IMR-90 (cell line): ENCODE measurements at regions of chr6 and their contacts with region 1.

Region 1: GRCh38 chr6:68677058-68677457 is 42.0 kb downstream of the ADGRB3 start:
- DNase-seq: no peak
- ATAC-seq: no peak
- H3K4me3 ChIP-seq: no peak overlapping the region
- H3K27ac ChIP-seq: no peak overlapping the region
- H3K4me1 ChIP-seq: no peaks in the 10 kb centered on the region
- H3K27me3 ChIP-seq: no peaks in the 10 kb centered on the region
- CTCF ChIP-seq: no peak
- POLR2A ChIP-seq: no peak
- RAD21 ChIP-seq: no peak

Region 2: DNA sequence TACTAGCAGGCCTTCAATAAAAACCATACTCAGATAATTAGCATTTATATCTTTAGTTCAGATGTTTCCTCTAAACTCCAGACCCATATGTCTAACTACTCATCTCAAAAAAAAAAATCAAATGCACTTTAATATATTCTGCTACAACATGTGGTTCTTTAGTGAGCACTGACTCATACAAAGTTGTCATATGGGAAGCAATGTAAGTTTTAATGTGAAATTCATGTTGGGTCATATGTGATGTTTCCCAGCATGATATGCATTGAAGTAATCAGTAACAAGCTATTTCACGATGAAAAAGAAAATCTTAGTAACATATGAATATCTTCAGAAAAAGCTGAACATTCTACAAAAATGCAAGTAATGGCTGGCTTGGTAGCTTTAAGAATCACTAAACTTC is 901.7 kb before region 1 on chr6:
- CTCF ChIA-PET with region 1: no interaction called
- POLR2A ChIA-PET with region 1: no interaction called
- dilution Hi-C with region 1: no loop called
- in situ Hi-C with region 1: no loop called
- intact Hi-C with region 1: no loop called
- DNase-seq: no peak
- ATAC-seq: no peak
- H3K4me3 ChIP-seq: no peak overlapping the region
- H3K27ac ChIP-seq: no peak overlapping the region
- H3K4me1 ChIP-seq: no peaks in the 10 kb centered on the region
- H3K27me3 ChIP-seq: no peaks in the 10 kb centered on the region
- CTCF ChIP-seq: no peak
- POLR2A ChIP-seq: no peak
- RAD21 ChIP-seq: no peak

Region 3: DNA sequence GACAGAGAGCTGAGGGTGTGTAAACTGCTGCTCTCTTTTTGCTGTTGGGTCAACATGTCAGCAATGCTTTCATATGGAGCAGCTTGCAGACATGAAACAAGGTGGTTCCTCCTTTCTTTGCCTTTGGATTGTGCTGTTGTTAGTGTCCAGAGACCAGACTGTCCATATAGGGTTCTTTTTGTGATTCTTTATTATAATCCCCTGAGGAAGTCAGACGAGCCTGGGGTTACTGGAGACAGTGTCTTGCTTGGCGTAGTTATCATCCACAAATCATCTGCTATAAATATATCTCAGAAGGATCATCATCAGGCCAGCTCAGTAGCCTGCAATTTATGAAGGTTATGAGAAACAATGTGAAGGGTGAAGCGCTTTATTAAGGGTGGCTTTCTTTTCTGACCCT is 44.3 kb before region 1 on chr6:
- CTCF ChIA-PET with region 1: no interaction called
- POLR2A ChIA-PET with region 1: no interaction called
- dilution Hi-C with region 1: no loop called
- in situ Hi-C with region 1: no loop called
- intact Hi-C with region 1: no loop called
- DNase-seq: no peak
- ATAC-seq: no peak
- H3K4me3 ChIP-seq: no peak overlapping the region
- H3K27ac ChIP-seq: no peak overlapping the region
- H3K4me1 ChIP-seq: no peaks in the 10 kb centered on the region
- H3K27me3 ChIP-seq: peaks cover 5% of the 10 kb centered on the region
- CTCF ChIP-seq: no peak
- POLR2A ChIP-seq: no peak
- RAD21 ChIP-seq: no peak

Region 4: DNA sequence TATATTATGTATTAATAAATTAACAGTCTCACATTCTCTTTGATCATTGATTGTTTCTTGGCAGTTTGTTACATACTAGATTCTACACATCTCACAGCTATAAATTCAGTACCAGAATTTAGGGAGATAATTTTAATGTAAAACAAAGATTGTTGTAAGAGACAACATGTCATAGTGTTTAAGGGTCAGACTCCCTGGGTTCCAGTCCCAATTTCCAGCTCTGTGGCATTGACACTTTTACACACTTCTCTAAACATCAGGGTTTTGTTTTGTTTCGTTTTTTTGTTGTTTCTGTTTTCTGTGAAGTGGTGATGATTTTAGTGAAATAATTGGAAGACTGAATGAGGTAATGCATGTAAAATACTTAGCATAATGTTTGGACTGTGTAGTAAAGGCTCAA is 22.0 kb before region 1 on chr6:
- CTCF ChIA-PET with region 1: no interaction called
- POLR2A ChIA-PET with region 1: no interaction called
- dilution Hi-C with region 1: no loop called
- in situ Hi-C with region 1: no loop called
- intact Hi-C with region 1: loop called (anchors 1 kb)
- DNase-seq: no peak
- ATAC-seq: no peak
- H3K4me3 ChIP-seq: no peak overlapping the region
- H3K27ac ChIP-seq: no peak overlapping the region
- H3K4me1 ChIP-seq: no peaks in the 10 kb centered on the region
- H3K27me3 ChIP-seq: no peaks in the 10 kb centered on the region
- CTCF ChIP-seq: no peak
- POLR2A ChIP-seq: no peak
- RAD21 ChIP-seq: no peak